OCI-LY7 (cell line): ENCODE measurements at regions of chr14 and their contacts with region 1.

Region 1: DNA sequence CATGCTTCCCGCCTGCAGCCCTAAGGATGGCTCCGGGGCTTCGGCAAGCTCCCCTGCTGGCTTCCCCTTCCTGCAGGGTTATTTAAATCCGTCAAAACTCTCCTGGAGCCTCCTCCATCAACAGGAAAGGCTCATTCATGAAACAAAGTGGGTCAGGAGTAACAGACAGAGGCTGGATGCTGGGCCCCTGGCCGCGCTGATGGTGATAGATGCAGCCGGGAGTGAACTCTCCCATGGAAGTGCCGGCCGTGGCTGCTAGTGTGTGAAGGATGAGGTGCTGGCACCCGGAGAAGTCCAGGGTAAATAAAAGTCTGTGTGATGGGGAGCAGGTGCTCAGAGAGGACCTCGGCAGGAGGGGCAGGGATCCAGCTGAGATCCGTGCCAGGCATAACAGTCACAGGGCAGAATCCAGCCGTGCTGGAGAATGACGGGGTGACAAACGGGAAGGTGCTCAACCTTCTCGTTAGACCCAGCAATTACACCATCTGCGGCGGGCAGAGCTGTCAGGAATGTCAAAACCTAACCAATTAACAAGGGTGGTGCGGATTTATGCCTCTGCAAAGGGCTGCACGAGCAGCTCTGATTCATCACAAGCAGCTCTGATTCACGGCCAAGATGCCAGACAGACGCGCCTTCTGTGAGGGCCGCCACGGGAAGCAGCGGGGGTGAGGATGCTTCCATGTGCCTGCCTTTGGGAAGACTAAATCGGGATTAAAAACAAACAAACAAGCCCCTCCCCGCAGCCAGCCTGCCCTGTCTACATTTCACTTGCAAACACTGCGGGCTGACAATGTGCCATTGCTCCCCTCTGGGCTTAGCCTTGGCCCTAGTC is 55.6 kb downstream of the SYNE3 start:
- DNase-seq: no peak
- H3K4me3 ChIP-seq: no peak overlapping the region
- H3K27ac ChIP-seq: no peak overlapping the region
- H3K4me1 ChIP-seq: peaks cover 43% of the 10 kb centered on the region
- CTCF ChIP-seq: no peak

Region 2: DNA sequence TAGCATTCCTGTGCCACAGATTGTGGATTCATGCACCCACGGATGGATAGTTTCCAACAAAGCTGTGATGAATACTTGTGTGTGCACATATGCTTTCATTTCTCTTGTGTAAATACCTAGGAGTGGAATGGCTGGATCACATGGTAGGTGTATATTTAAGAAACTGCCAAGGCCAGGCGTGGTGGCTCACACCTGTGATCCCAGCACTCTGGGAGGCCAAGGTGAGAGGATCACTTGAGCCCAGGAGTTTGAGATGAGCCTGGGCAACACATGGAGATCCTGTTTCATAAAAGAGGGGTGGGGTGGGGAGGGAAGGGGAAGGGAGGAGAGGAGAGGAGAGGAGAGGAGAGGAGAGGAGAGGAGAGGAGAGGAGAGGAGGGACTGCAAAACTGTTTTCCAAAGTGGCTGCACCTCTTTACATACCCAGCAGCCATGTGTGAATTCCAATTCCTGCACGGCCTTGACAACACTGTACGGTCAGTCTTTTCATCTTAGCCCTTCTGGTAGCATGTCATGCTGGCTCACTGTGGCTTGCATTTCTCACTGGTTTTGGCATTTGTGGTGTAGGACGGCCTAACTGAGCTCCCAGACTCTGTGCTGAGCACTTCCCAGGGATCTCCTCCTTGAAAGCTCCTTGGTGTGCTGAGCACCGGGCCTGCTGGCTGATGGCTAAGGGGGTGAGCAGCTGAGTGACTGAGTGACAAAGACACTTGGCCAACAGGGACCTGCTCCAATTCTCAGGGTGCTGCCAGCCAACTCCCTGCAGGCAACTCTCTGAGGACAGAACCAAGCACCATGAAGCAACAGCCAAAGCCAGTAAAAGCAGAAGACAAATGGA is 27.7 kb after region 1 on chr14:
- CTCF ChIA-PET with region 1: interaction called, 3 read pairs
- POLR2A ChIA-PET with region 1: interaction called, 16 read pairs
- intact Hi-C with region 1: loop called (anchors 1 kb)
- DNase-seq: peak; percentile 43
- H3K4me3 ChIP-seq: peak overlapping the region; percentile 63
- H3K27ac ChIP-seq: peak overlapping the region; percentile 87
- H3K4me1 ChIP-seq: peaks cover 70% of the 10 kb centered on the region
- CTCF ChIP-seq: no peak

Region 3: GRCh38 chr14:95495538-95496025 is 34.7 kb after region 1 on chr14:
- CTCF ChIA-PET with region 1: no interaction called
- POLR2A ChIA-PET with region 1: interaction called, 10 read pairs
- intact Hi-C with region 1: loop called (anchors 2 kb)
- DNase-seq: peak; percentile 87
- H3K4me3 ChIP-seq: peak overlapping the region; percentile 17
- H3K27ac ChIP-seq: peak overlapping the region; percentile 68
- H3K4me1 ChIP-seq: peaks cover 59% of the 10 kb centered on the region
- CTCF ChIP-seq: no peak

Region 4: DNA sequence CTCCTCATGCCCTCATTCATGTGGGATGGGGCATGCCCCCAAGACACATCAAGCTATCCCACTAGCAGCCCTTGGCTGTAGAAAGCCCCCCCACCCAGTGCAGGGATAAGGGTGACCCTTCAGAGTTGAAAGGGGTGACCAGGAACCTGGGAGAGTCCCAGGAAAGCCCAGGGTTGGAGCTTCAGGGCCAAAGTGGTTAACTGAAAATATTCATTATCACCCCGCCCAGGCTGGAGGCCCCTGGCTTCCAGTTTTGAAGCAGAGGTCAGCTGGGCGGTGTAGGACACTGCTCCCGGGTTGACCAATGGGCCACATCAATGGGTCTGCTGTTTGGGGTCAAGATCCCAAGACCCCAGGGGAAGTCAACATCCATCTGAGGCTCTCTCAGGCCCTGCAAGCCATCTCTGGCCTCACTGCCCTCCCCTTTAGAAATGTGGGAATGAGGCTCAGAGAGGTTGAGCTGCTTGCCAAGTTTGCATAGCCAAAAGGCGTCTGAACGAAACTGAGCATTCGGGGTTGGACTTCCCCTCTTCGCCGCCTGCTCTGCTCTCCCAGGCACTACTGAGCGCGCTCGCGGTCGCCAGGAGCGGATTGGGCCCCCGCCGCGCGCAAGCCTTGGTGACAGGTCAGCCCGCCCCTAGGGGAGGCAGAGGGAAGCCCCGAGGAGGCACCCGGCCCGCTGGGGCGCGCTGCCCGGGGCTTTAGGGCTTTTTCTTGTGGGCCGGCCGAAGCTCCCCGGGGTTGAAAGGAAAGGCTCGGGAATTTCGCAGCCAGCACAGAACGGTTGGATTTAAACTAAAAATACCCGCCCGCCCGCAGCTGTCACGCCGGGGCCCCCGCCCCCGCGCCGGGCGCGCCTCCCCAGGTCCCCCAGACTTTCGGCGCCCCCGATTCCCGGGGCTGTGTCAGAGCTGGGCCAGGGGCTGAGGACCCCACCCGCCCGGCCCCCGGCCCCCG is 55.0 kb after region 1 on chr14:
- CTCF ChIA-PET with region 1: no interaction called
- POLR2A ChIA-PET with region 1: interaction called, 4 read pairs
- intact Hi-C with region 1: loop called (anchors 2 kb)
- DNase-seq: peak; percentile 88
- H3K4me3 ChIP-seq: peak overlapping the region; percentile 64
- H3K27ac ChIP-seq: no peak overlapping the region
- H3K4me1 ChIP-seq: peaks cover 57% of the 10 kb centered on the region
- CTCF ChIP-seq: peak; percentile 71